ENCODE measurements at regions of chr11 and their contacts with region 1.

Region 1: GRCh38 chr11:70467201-70468085 is 69.1 kb downstream of the CTTN start:
- DNase-seq: peak in 1 of 2 experiments; percentile 83
- H3K4me3 ChIP-seq: no peak overlapping the region
- H3K4me3 Mint-ChIP-seq: no peak overlapping the region
- H3K27ac Mint-ChIP-seq: no peak overlapping the region
- H3K4me1 ChIP-seq: no peaks in the 10 kb centered on the region
- H3K4me1 Mint-ChIP-seq: peaks cover 7% of the 10 kb centered on the region
- H3K27me3 ChIP-seq: no peaks in the 10 kb centered on the region
- H3K27me3 Mint-ChIP-seq: no peaks in the 10 kb centered on the region
- CTCF ChIP-seq: peak; percentile 98 to 99

Region 2: DNA sequence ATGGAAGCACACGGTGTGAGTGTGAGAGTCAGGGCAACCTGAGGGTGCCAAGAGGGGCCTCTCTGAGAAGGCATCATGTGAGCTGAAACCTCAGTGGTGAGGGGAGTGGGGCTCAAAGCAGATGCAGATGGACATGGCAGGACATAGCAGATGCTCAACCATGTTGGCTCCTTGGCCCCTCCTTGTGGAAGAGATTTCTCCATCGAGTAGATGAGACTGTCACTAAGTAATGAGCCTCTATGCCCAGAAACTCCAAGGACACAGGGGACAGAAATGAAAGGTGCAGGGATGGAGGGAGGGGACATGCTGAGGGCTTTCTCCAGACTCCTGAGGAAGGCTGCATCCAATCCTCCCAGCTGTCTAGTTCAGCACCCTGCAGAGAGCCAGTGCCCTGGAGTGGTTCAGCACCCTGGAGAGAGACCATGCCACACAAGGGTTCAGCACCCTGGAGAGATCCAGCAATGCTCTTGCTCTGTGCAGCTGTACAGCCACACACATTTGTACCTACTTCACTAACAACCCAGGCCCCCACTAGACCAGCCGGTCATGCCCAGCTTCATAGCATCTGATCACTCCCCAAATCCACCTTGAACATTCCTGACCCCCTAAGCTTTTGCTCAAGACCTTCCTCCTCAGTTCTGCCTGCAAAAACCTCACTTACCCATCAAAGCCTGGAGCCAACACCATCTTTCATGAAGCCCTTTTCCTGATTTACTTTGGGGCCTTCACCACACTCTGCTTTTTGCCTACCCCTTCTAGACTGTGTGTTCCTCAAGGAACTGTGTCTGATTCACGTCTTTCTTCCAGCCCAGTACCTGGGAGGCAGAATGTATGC is 182.8 kb after region 1 on chr11:
- CTCF ChIA-PET with region 1: no interaction called
- POLR2A ChIA-PET with region 1: no interaction called
- intact Hi-C with region 1: loop called (anchors 10 kb)
- DNase-seq: peak; percentile 84 to 92
- H3K4me3 ChIP-seq: no peak overlapping the region
- H3K4me3 Mint-ChIP-seq: no peak overlapping the region
- H3K27ac Mint-ChIP-seq: no peak overlapping the region
- H3K4me1 ChIP-seq: no peaks in the 10 kb centered on the region
- H3K4me1 Mint-ChIP-seq: no peaks in the 10 kb centered on the region
- H3K27me3 ChIP-seq: no peaks in the 10 kb centered on the region
- H3K27me3 Mint-ChIP-seq: no peaks in the 10 kb centered on the region
- CTCF ChIP-seq: no peak

Region 3: GRCh38 chr11:70732881-70733196 is 265.4 kb after region 1 on chr11:
- CTCF ChIA-PET with region 1: no interaction called
- POLR2A ChIA-PET with region 1: no interaction called
- intact Hi-C with region 1: loop called (anchors 5 kb)
- DNase-seq: no peak
- H3K4me3 ChIP-seq: no peak overlapping the region
- H3K4me3 Mint-ChIP-seq: no peak overlapping the region
- H3K27ac Mint-ChIP-seq: no peak overlapping the region
- H3K4me1 ChIP-seq: no peaks in the 10 kb centered on the region
- H3K4me1 Mint-ChIP-seq: no peaks in the 10 kb centered on the region
- H3K27me3 ChIP-seq: no peaks in the 10 kb centered on the region
- H3K27me3 Mint-ChIP-seq: no peaks in the 10 kb centered on the region
- CTCF ChIP-seq: no peak

Region 4: GRCh38 chr11:70755410-70756161 is 288.1 kb after region 1 on chr11:
- CTCF ChIA-PET with region 1: interaction called, 3 read pairs
- POLR2A ChIA-PET with region 1: no interaction called
- intact Hi-C with region 1: loop called (anchors 1 kb)
- DNase-seq: peak; percentile 79 to 81
- H3K4me3 ChIP-seq: no peak overlapping the region
- H3K4me3 Mint-ChIP-seq: no peak overlapping the region
- H3K27ac Mint-ChIP-seq: no peak overlapping the region
- H3K4me1 ChIP-seq: no peaks in the 10 kb centered on the region
- H3K4me1 Mint-ChIP-seq: no peaks in the 10 kb centered on the region
- H3K27me3 ChIP-seq: no peaks in the 10 kb centered on the region
- H3K27me3 Mint-ChIP-seq: no peaks in the 10 kb centered on the region
- CTCF ChIP-seq: peak; percentile 89 to 91

Region 5: DNA sequence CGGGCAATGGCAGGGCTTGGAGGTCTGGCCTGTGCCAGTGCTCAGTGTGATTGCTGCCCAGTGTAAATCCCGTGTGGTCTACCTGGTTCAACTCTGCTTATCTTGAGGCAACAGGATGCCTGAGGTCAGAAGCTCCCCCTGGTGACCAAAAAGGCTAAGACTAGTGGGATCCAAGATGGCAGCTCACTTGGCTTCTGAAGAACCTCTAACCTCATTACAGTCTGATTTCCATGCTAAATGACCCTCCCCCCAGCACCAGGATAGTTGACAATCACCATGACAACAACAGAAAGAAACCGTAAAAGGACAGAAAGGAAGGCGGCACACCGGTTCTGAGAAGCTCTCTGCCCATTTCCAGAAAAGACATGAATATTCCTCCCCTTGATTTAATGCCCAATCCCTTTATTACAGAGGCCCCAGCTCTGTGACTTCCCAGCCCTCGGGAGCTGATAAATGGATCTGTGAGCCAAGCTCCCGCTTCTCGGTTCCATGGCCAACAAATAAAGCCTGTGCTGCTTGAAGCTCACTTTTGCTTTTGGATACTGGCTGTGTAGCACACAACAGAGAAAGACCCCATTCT is 329.3 kb after region 1 on chr11:
- CTCF ChIA-PET with region 1: no interaction called
- POLR2A ChIA-PET with region 1: no interaction called
- intact Hi-C with region 1: loop called (anchors 2 kb)
- DNase-seq: peak in 1 of 2 experiments; percentile 34
- H3K4me3 ChIP-seq: no peak overlapping the region
- H3K4me3 Mint-ChIP-seq: no peak overlapping the region
- H3K27ac Mint-ChIP-seq: no peak overlapping the region
- H3K4me1 ChIP-seq: no peaks in the 10 kb centered on the region
- H3K4me1 Mint-ChIP-seq: no peaks in the 10 kb centered on the region
- H3K27me3 ChIP-seq: no peaks in the 10 kb centered on the region
- H3K27me3 Mint-ChIP-seq: no peaks in the 10 kb centered on the region
- CTCF ChIP-seq: peak; percentile 25 to 29

Region 6: DNA sequence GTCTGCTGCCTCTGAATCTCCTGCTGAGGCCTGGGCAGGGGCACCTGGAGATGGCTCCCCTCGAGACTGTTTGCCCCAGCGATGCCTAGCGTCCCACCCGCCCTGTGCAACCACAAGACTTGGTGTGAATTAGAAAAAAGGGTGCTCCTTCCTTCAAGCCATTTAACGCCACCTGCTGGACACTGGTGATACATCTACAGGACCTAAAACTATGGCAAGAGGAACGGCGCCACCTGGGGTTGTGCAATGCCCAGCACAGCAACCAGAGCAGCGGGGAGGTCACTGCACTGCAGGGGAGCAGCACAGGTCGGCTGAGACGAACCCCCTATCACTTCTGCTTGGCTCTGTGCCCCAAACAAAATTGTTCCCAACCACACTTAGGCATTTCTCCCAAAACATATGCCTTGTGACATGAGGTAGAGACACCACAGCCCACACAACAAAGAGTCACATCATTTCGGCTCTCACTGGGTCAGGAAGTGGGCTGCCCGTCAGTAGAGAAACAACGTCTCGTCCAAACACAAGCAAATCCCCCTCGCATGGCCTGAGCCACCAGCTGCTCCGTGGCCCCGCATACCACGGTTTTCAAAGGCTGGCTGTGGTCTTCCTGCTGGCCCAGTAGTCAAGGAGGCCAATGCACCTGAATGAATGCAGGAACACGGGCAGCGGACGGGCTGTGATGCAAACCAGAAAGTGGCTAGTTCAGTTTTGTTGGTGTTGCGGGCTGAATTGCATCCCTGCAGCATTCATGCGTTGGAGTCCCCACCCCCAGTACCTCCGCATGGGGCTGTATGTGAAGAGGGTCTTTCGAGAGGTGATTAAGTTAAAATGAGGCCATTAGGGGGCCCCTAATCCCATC is 613.0 kb after region 1 on chr11:
- CTCF ChIA-PET with region 1: no interaction called
- POLR2A ChIA-PET with region 1: no interaction called
- intact Hi-C with region 1: loop called (anchors 1 kb)
- DNase-seq: peak; percentile 85 to 87
- H3K4me3 ChIP-seq: no peak overlapping the region
- H3K4me3 Mint-ChIP-seq: no peak overlapping the region
- H3K27ac Mint-ChIP-seq: no peak overlapping the region
- H3K4me1 ChIP-seq: no peaks in the 10 kb centered on the region
- H3K4me1 Mint-ChIP-seq: peaks cover 14% of the 10 kb centered on the region
- H3K27me3 ChIP-seq: no peaks in the 10 kb centered on the region
- H3K27me3 Mint-ChIP-seq: no peaks in the 10 kb centered on the region
- CTCF ChIP-seq: peak; percentile 95

Region 7: DNA sequence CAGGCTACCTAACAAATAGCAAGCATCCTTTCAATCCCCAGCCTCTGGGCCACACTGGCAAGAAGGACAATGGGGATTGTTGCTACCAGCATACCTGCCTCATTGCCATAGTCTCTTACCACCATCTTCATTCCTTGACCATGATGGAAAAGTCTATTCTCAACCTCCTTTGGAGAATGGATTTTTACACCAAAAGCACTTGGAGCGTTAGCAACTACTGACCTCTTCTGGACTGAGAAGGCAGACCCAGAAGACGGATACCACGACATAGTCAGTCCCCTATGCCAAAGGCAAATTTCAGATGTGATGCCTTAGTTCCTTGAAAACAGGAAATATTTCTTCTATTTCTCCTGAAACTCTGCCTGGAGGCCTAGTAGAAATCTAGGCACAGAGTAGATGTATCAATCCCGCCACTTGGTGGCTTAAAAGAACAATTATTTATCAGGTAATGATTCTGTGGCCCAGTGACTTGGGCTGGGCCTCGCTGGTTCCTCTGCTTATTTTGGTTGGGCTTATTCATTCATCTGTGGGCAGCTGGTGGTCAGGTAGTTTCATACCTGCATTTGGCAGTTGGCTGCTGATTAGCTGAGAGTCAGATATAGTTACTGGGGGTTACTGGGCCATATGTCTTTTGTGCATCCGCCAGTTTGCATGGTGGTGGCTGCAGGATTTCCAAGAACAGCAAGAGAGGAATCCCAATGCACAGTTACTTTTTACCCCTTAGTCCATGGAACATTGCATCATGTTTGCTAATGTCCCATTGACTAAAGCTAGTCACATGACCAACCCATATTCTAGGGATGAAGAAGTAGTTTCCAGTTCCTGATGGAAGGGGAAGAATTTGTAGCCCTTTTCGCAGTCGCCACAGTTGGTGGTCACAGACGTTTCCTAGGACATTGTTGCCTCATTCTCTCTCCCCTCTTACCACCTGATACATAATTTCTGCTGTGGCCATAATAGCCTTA is 905.5 kb after region 1 on chr11:
- CTCF ChIA-PET with region 1: no interaction called
- POLR2A ChIA-PET with region 1: no interaction called
- intact Hi-C with region 1: loop called (anchors 1 kb)
- DNase-seq: peak in 1 of 2 experiments; percentile 60
- H3K4me3 ChIP-seq: no peak overlapping the region
- H3K4me3 Mint-ChIP-seq: no peak overlapping the region
- H3K27ac Mint-ChIP-seq: no peak overlapping the region
- H3K4me1 ChIP-seq: no peaks in the 10 kb centered on the region
- H3K4me1 Mint-ChIP-seq: no peaks in the 10 kb centered on the region
- H3K27me3 ChIP-seq: no peaks in the 10 kb centered on the region
- H3K27me3 Mint-ChIP-seq: peaks cover 11% of the 10 kb centered on the region
- CTCF ChIP-seq: peak; percentile 74 to 90